ENCODE measurements at regions of chrX and their contacts with region 1.

Region 1: GRCh38 chrX:135454816-135455215 is 33.1 kb downstream of the SMIM10L2A start:
- DNase-seq: no peak
- H3K4me3 ChIP-seq: no peak overlapping the region
- H3K27ac ChIP-seq: no peak overlapping the region
- H3K4me1 ChIP-seq: no peaks in the 10 kb centered on the region
- H3K27me3 ChIP-seq: no peaks in the 10 kb centered on the region
- CTCF ChIP-seq: no peak

Region 2: DNA sequence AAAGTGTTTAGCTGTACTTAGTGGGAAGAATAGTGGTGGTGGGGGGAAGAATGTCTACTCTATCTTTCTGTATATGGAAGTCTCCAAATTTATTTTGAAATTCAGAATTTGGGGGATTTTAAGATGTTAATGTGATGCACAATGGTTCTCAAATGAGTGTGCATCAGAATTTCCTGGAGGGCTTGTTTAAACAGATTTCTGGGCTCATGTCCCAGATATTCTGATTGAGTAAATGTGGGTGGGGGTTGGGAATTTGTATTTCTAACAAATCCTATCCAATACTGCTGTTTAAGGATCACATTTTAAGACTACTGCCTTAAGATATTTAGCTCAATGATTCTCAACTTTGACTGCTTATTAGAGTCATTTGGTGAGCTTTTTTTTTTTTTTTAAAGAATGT is 50.5 kb after region 1 on chrX:
- CTCF ChIA-PET with region 1: no interaction called
- POLR2A ChIA-PET with region 1: no interaction called
- intact Hi-C with region 1: loop called (anchors 5 kb)
- DNase-seq: no peak
- H3K4me3 ChIP-seq: no peak overlapping the region
- H3K27ac ChIP-seq: no peak overlapping the region
- H3K4me1 ChIP-seq: no peaks in the 10 kb centered on the region
- H3K27me3 ChIP-seq: no peaks in the 10 kb centered on the region
- CTCF ChIP-seq: no peak

Measured in A673 (cell line).